ENCODE measurements at regions of chr1 and their contacts with region 1.

Region 1: DNA sequence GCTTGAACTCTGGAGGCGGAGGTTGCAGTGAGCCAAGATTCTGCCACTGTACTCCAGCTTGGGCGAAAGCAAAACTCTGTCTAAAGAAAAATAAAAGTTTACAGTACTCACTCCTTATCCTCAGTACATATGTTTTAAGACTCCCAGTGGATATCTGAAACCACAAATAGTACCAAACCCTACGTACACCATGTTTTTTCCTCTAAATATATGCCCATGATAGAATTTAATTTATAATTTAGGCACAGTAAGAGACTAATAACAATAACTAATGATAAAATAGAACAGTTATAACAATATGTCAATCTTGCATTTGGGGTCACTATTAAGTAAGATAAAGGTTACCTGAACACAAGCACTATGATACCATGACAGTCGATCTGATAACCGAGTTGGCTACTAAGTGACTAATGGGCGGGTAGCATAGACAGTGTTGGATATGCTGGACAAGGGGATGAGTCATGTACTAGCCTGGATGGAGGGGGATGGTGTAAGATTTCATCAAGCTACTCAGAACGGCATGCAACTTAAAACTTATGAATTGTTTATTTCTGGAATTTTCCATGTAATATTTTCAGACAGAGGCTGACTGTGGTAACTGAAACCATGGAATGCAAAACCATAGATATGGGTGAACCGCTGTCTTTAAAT is 43.7 kb downstream of the ST7L start:
- DNase-seq: peak; percentile 72
- H3K4me3 ChIP-seq: no peak overlapping the region
- H3K27me3 ChIP-seq: no peaks in the 10 kb centered on the region
- CTCF ChIP-seq: no peak

Region 2: GRCh38 chr1:112209488-112209887 is 365.8 kb before region 1 on chr1:
- CTCF ChIA-PET with region 1: no interaction called
- POLR2A ChIA-PET with region 1: no interaction called
- DNase-seq: no peak
- H3K4me3 ChIP-seq: no peak overlapping the region
- H3K27me3 ChIP-seq: no peaks in the 10 kb centered on the region
- CTCF ChIP-seq: no peak

Region 3: GRCh38 chr1:112557385-112557784 is 17.9 kb before region 1 on chr1:
- CTCF ChIA-PET with region 1: interaction called, 10 read pairs
- POLR2A ChIA-PET with region 1: no interaction called
- DNase-seq: no peak
- H3K4me3 ChIP-seq: no peak overlapping the region
- H3K27me3 ChIP-seq: no peaks in the 10 kb centered on the region
- CTCF ChIP-seq: no peak

Measured in BJ (cell line).